Psoas muscle (tissue), 8 donors: ENCODE measurements at regions of chr12 and their contacts with region 1.

Region 1: GRCh38 chr12:71754461-71755145 is at the start of gene RAB21:
- DNase-seq: peak; percentile 99
- ATAC-seq: peak; percentile 89 to 94 (median 91)
- H3K4me3 ChIP-seq: peak within 1 kb of the TSS; percentile 91
- H3K27ac ChIP-seq: peak within 1 kb of the TSS; percentile 97
- H3K4me1 ChIP-seq: peaks cover 8% of the 10 kb centered on the region
- H3K27me3 ChIP-seq: no peaks in the 10 kb centered on the region
- CTCF ChIP-seq: peak; percentile 36
- total RNA-seq, gene RAB21: 152 to 180 (median 167) TPM

Region 2: DNA sequence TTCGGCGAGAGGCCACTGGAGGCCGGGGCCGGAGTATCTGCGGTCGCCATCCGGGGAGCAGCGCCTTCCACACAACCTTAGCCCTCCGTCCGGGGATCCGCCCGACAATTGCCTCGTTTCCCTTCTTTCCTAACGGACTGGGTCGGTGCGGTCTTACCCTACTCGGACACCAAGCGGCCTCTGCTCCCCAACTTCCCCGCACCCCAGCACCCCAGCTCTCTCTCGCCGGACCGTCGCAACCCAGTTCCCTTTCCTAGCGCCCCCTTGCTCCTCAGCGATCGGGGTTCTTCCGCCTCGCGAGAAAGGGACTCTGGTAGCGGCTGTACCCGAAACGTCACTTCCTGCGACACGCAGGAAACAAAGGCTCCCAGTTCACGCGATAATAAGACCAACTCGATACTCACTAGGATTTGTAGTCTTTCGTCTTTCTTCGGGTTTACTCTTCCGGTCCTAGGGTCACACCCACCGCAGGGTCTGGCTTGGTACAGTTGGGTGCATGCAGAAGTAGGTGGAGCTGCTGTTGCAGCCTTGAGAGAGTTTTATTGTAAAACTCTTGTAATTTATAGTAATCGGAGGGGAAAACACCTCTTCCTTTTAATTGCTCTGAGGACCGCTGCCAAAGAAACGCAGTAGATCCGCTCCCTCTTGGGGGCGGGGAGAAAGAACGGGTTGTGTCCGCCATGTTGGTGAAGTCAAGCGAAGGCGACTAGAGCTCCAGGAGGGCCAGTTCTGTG is 90.9 kb before region 1 on chr12 and contains the start of gene ZFC3H1:
- intact Hi-C with region 1: loop called in 1 of 2 experiments (anchors 5 kb)
- DNase-seq: peak; percentile 89 to 95
- ATAC-seq: peak; percentile 94 to 96 (median 95)
- H3K4me3 ChIP-seq: peak within 1 kb of the TSS; percentile 93
- H3K27ac ChIP-seq: peak within 1 kb of the TSS; percentile 97
- H3K4me1 ChIP-seq: peaks cover 27% of the 10 kb centered on the region
- H3K27me3 ChIP-seq: no peaks in the 10 kb centered on the region
- CTCF ChIP-seq: peak; percentile 20
- total RNA-seq, gene ZFC3H1: 9.8 to 18.1 (median 15.5) TPM

Region 3: GRCh38 chr12:71685914-71686665 is 68.5 kb before region 1 on chr12 and contains the start of gene TMEM19:
- intact Hi-C with region 1: loop called (anchors 2 to 5 kb)
- DNase-seq: peak; percentile 92 to 95
- ATAC-seq: peak; percentile 97 to 98 (median 98)
- H3K4me3 ChIP-seq: peak within 1 kb of the TSS; percentile 84
- H3K27ac ChIP-seq: peak within 1 kb of the TSS; percentile 95
- H3K4me1 ChIP-seq: peaks cover 34% of the 10 kb centered on the region
- H3K27me3 ChIP-seq: no peaks in the 10 kb centered on the region
- CTCF ChIP-seq: no peak
- total RNA-seq, gene TMEM19: 10.4 to 29.7 (median 23.0) TPM